GM12878 (cell line): ENCODE measurements at regions of chr16 and their contacts with region 1.

Region 1: DNA sequence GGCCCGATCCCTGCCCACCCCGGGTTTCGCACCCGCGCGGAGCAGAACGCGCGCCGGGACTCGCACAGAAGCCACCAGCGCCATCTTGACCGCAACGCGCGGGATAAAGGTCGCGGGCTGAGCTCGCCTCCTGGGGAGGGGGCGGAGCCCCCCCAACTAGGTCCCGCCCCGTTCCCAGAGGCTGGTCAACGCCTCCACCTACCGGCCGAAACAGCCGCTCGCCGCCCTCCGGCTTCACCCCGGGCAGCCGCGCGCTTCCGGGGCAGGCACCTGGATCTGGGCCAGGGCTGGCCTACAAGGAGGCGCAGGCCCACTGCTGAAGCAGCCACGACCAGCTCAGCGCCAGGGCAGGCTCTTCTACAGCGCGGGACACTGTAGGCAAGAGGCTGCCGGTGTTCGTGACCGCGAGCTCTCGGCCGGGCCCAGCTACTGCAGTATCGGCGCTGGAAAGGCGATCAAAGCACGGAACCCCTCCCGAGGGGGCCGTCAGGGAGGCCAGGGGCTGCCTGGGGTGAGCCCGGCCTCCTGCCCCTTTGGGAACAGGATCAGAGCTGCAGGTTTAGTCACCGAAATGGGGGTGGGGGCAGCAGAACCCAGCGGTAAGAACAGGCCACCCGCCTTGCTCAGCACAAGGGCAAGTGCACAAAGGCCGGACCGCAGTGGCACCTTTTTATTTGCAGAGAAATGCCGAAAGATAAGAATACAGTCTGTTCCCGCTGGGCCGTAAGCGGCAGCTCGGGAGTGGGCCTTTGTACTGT is at the start of gene ECI1:
- DNase-seq: peak; percentile 62
- ATAC-seq: peak; percentile 97
- H3K4me3 ChIP-seq: peak within 1 kb of the TSS; percentile 84
- H3K27ac ChIP-seq: peak within 1 kb of the TSS; percentile 76
- H3K4me1 ChIP-seq: peaks cover 13% of the 10 kb centered on the region
- H3K27me3 ChIP-seq: no peaks in the 10 kb centered on the region
- CTCF ChIP-seq: peak; percentile 50 to 94 (median 62); a peak in 5 of 6 replicates
- EP300 ChIP-seq: 0 out of 4 replicates have a peak, but pooled peaks of 1 of the 2 experiments have one; percentile 22
- POLR2A ChIP-seq: peak; percentile 91
- RAD21 ChIP-seq: 0 out of 2 replicates have a peak, but pooled peaks have one; percentile 32
- polyA plus RNA-seq, gene ECI1: 2.2 to 13.8 TPM

Region 2: GRCh38 chr16:1991948-1992703 is 259.5 kb before region 1 on chr16:
- CTCF ChIA-PET with region 1: no interaction called
- POLR2A ChIA-PET with region 1: interaction called, 10 read pairs
- RAD21 ChIA-PET with region 1: no interaction called
- SMC1A ChIA-PET with region 1: no interaction called
- in situ Hi-C with region 1: no loop called
- intact Hi-C with region 1: no loop called
- DNase-seq: peak; percentile 37
- ATAC-seq: peak; percentile 80
- H3K4me3 ChIP-seq: peak overlapping the region; percentile 65; the same call in 1 of the 2 replicates
- H3K27ac ChIP-seq: peak overlapping the region; percentile 27; the same call in 1 of the 2 replicates
- H3K4me1 ChIP-seq: peaks cover 26% of the 10 kb centered on the region
- H3K27me3 ChIP-seq: no peaks in the 10 kb centered on the region
- CTCF ChIP-seq: no peak
- EP300 ChIP-seq: no peak
- POLR2A ChIP-seq: peak; percentile 84
- RAD21 ChIP-seq: no peak

Region 3: GRCh38 chr16:2155091-2156021 is 96.3 kb before region 1 on chr16 and contains the start of gene TRAF7:
- CTCF ChIA-PET with region 1: interaction called, 3 read pairs
- POLR2A ChIA-PET with region 1: interaction called, 7 read pairs
- RAD21 ChIA-PET with region 1: interaction called, 14 read pairs
- SMC1A ChIA-PET with region 1: interaction called, 6 read pairs
- in situ Hi-C with region 1: no loop called
- intact Hi-C with region 1: no loop called
- DNase-seq: peak; percentile 100
- ATAC-seq: peak; percentile 88
- H3K4me3 ChIP-seq: peak within 1 kb of the TSS; percentile 99
- H3K27ac ChIP-seq: peak within 1 kb of the TSS; percentile 94
- H3K4me1 ChIP-seq: peaks cover 45% of the 10 kb centered on the region
- H3K27me3 ChIP-seq: no peaks in the 10 kb centered on the region
- CTCF ChIP-seq: no peak
- EP300 ChIP-seq: 0 out of 4 replicates have a peak, but pooled peaks of 1 of the 2 experiments have one; percentile 10
- POLR2A ChIP-seq: peak; percentile 100
- RAD21 ChIP-seq: no peak
- polyA plus RNA-seq, gene TRAF7: 0.61 to 2.1 TPM

Region 4: GRCh38 chr16:2194852-2195321 is 56.8 kb before region 1 on chr16:
- CTCF ChIA-PET with region 1: interaction called, 9 read pairs
- POLR2A ChIA-PET with region 1: no interaction called
- RAD21 ChIA-PET with region 1: interaction called, 11 read pairs
- SMC1A ChIA-PET with region 1: interaction called, 4 read pairs
- in situ Hi-C with region 1: no loop called
- intact Hi-C with region 1: no loop called
- DNase-seq: peak; percentile 11
- ATAC-seq: peak; percentile 91
- H3K4me3 ChIP-seq: no peak overlapping the region
- H3K27ac ChIP-seq: no peak overlapping the region
- H3K4me1 ChIP-seq: no peaks in the 10 kb centered on the region; the same call in 1 of the 2 replicates
- H3K27me3 ChIP-seq: peaks cover 12 to 15% of the 10 kb centered on the region in 2 experiments
- CTCF ChIP-seq: peak; percentile 43 to 65 (median 48)
- EP300 ChIP-seq: no peak
- POLR2A ChIP-seq: no peak
- RAD21 ChIP-seq: peak; percentile 55

Region 5: DNA sequence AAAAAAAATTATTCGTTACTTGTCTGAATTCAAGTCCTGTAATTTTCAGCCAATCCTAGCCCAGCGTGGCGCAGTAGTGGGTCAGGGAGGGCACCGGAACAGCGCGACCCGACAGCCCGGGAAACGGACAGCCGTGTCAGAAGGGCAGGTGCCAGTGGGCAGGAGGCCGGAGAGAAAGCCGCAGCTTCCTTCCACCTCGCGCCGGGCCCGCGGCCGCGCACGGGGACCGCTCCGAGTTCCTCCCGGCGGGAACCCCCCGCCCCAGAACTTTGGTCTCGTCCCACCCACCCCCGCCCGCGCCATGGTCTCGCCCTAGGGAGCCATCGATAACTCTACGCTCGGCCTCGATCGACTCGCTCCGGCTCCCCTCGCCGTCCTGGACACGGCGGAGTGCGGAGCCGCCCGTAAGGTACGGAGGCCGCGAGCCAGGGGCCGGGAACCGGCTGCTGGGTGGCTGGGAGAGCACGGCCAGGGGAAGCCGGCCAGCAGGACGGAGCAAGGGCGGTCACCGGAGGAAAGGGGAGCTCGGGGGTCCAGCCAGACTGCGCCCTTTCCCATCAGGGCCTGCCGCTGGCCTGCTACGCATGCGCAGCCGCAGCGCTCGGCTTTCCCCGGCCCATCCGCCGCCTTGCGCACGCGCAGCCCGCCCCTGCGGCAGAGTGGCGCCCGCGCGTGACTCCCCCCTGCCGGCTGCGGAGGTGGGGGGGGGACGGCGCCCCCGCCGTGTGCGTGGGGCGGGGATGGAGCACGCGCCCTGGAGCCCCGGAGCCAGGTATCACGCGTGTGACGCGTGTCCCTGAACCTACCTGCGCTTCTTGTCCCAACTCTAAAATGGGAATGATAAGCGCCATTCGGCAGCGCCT is 46.3 kb before region 1 on chr16 and contains the start of gene MLST8:
- CTCF ChIA-PET with region 1: interaction called, 3 read pairs
- POLR2A ChIA-PET with region 1: interaction called, 4 read pairs
- RAD21 ChIA-PET with region 1: interaction called, 3 read pairs
- SMC1A ChIA-PET with region 1: no interaction called
- in situ Hi-C with region 1: no loop called
- intact Hi-C with region 1: loop called (anchors 5 kb)
- DNase-seq: peak; percentile 45
- ATAC-seq: peak; percentile 85
- H3K4me3 ChIP-seq: peak within 1 kb of the TSS; percentile 93
- H3K27ac ChIP-seq: peak within 1 kb of the TSS; percentile 96
- H3K4me1 ChIP-seq: peaks cover 6% of the 10 kb centered on the region; the same call in 1 of the 2 replicates
- H3K27me3 ChIP-seq: no peaks in the 10 kb centered on the region
- CTCF ChIP-seq: peak in 1 of 3 experiments; percentile 2; a peak in 1 of 6 replicates
- EP300 ChIP-seq: no peak
- POLR2A ChIP-seq: peak; percentile 92
- RAD21 ChIP-seq: no peak
- polyA plus RNA-seq, gene MLST8: 1.0 to 6.3 TPM

Region 6: DNA sequence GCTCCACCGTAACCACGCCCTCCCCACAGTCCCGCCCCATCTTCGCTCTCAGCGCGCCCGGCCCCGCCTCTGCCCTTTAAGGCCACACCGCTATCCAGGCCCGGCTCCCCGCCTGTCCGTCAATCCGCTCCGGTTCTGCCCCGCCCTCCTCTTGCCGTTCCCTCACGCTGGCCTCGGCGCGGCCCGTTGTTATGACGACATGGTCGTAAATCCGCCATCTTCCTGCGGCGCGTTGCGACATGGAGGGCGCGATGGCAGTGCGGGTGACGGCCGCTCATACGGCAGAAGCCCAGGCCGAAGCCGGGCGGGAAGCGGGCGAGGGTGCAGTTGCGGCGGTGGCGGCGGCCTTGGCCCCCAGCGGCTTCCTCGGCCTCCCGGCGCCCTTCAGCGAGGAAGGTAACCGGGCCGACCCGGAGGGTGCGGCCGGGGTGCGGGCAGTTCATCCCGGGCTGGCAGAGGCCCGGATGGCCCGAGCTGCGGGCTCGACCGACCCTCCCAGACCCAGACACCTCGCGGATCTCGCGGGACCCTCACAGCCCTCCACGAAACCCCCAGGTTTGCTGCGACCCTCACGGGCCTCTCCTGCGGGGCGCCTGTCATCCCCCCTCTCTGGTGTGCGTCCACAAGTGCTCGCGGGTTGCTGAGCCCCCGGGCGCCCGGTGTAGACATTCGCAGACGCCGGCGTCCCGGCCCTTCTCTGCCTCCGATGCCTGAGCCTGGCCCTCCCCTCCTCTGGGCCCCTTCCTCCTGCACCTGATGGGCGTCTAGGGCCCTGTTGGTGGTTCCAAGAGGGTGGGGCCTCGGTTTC is 28.1 kb before region 1 on chr16 and contains the start of gene E4F1:
- CTCF ChIA-PET with region 1: interaction called, 3 read pairs
- POLR2A ChIA-PET with region 1: no interaction called
- RAD21 ChIA-PET with region 1: interaction called, 3 read pairs
- SMC1A ChIA-PET with region 1: interaction called, 3 read pairs
- in situ Hi-C with region 1: no loop called
- intact Hi-C with region 1: loop called (anchors 2 kb)
- DNase-seq: peak; percentile 97
- ATAC-seq: peak; percentile 98
- H3K4me3 ChIP-seq: peak within 1 kb of the TSS; percentile 96
- H3K27ac ChIP-seq: peak within 1 kb of the TSS; percentile 78
- H3K4me1 ChIP-seq: peaks cover 5% of the 10 kb centered on the region; the same call in 1 of the 2 replicates
- H3K27me3 ChIP-seq: no peaks in the 10 kb centered on the region
- CTCF ChIP-seq: no peak
- EP300 ChIP-seq: peak in 1 of 2 experiments; percentile 41; a peak in 1 of 4 replicates
- POLR2A ChIP-seq: peak; percentile 99
- RAD21 ChIP-seq: no peak
- polyA plus RNA-seq, gene E4F1: 0.23 to 2.1 TPM

Region 7: GRCh38 chr16:2267913-2268666 is 16.4 kb after region 1 on chr16 and contains the start of gene RNPS1:
- CTCF ChIA-PET with region 1: interaction called, 12 read pairs
- POLR2A ChIA-PET with region 1: interaction called, 4 read pairs
- RAD21 ChIA-PET with region 1: interaction called, 3 read pairs
- SMC1A ChIA-PET with region 1: interaction called, 4 read pairs
- in situ Hi-C with region 1: no loop called
- intact Hi-C with region 1: no loop called
- DNase-seq: peak; percentile 80
- ATAC-seq: peak; percentile 96
- H3K4me3 ChIP-seq: peak within 1 kb of the TSS; percentile 79
- H3K27ac ChIP-seq: peak within 1 kb of the TSS; percentile 90
- H3K4me1 ChIP-seq: peaks cover 11% of the 10 kb centered on the region
- H3K27me3 ChIP-seq: no peaks in the 10 kb centered on the region
- CTCF ChIP-seq: no peak
- EP300 ChIP-seq: 0 out of 4 replicates have a peak, but pooled peaks of 1 of the 2 experiments have one; percentile 10
- POLR2A ChIP-seq: peak; percentile 96
- RAD21 ChIP-seq: no peak
- polyA plus RNA-seq, gene RNPS1: 38.2 to 63.5 TPM